Transverse colon (tissue), 4 donors: ENCODE measurements at regions of chr14 and their contacts with region 1.

Region 1: DNA sequence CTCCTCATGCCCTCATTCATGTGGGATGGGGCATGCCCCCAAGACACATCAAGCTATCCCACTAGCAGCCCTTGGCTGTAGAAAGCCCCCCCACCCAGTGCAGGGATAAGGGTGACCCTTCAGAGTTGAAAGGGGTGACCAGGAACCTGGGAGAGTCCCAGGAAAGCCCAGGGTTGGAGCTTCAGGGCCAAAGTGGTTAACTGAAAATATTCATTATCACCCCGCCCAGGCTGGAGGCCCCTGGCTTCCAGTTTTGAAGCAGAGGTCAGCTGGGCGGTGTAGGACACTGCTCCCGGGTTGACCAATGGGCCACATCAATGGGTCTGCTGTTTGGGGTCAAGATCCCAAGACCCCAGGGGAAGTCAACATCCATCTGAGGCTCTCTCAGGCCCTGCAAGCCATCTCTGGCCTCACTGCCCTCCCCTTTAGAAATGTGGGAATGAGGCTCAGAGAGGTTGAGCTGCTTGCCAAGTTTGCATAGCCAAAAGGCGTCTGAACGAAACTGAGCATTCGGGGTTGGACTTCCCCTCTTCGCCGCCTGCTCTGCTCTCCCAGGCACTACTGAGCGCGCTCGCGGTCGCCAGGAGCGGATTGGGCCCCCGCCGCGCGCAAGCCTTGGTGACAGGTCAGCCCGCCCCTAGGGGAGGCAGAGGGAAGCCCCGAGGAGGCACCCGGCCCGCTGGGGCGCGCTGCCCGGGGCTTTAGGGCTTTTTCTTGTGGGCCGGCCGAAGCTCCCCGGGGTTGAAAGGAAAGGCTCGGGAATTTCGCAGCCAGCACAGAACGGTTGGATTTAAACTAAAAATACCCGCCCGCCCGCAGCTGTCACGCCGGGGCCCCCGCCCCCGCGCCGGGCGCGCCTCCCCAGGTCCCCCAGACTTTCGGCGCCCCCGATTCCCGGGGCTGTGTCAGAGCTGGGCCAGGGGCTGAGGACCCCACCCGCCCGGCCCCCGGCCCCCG is 576 bp downstream of the SYNE3 start:
- DNase-seq: peak; percentile 85
- H3K4me3 ChIP-seq: peak overlapping the region; percentile 37 to 92 (median 67)
- H3K27ac ChIP-seq: peak overlapping the region; percentile 81 to 90 (median 86)
- H3K4me1 ChIP-seq: peaks cover 23 to 62% (median 40%) of the 10 kb centered on the region in 4 donors
- H3K27me3 ChIP-seq: no peaks in the 10 kb centered on the region
- CTCF ChIP-seq: peak; percentile 35 to 59 (median 47)
- EP300 ChIP-seq: no peak
- POLR2A ChIP-seq: no peak

Region 2: DNA sequence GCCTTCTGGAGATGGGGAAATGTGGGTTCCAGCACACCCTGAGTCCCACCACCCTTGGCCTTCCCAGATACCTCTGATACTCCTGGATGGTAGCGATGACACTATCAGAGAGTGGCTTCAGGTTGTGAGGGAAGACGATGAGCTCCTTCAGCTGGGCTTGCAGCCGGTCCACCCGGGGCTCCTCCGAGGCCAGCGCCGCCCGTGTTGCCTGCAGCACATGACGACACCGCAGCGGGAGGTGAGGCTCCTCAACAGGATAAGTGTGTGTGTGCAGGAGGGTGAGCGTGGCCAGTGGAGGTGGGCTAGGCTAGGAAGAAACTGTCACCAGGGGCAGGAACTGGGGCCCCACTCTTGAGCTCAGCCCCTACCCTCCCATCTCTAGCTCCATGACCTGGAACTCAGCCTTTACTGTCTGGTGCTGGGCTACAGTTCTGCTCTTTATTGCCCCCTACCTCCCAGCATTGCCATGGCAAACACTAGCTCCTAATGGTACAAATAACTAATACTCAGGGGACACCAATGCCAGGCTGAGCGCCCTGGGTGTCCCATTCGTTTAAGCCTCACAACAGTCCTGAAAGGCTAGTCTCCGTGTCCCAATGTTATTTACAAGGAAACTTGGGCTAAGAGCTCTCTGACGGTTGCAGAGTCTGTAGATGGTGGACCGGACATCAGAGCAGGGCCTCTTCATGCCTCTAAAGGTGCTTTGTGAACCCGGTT is 63.5 kb before region 1 on chr14:
- in situ Hi-C with region 1: loop called in 1 of 4 experiments (anchors 10 kb)
- intact Hi-C with region 1: loop called (anchors 5 kb)
- DNase-seq: no peak
- H3K4me3 ChIP-seq: no peak overlapping the region
- H3K27ac ChIP-seq: no peak overlapping the region
- H3K4me1 ChIP-seq: no peaks in the 10 kb centered on the region
- H3K27me3 ChIP-seq: no peaks in the 10 kb centered on the region
- CTCF ChIP-seq: peak in 2 of 5 experiments; percentile 12 to 17
- EP300 ChIP-seq: no peak
- POLR2A ChIP-seq: no peak

Region 3: DNA sequence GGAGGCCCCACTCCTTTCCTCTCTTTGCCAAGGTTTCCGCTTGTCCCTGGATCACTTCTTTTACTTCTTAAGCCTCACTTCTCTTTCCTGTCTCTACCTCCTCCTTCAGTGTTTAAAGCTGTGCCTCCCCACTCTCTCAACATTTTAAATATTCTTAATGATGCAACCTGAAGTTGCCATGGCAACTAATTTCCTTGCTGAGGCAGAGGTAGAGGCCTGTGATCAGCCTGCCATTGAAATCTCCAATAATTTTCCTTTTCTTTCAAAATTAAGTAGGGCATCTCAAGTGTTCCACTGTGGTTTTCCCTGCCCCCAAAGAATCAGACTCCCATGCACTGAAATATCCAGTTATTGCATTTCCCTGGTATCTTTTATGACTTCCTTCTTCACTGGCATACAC is 1172.8 kb after region 1 on chr14:
- in situ Hi-C with region 1: no loop called
- intact Hi-C with region 1: no loop called
- DNase-seq: no peak
- H3K4me3 ChIP-seq: no peak overlapping the region
- H3K27ac ChIP-seq: no peak overlapping the region
- H3K4me1 ChIP-seq: no peaks in the 10 kb centered on the region
- H3K27me3 ChIP-seq: no peaks in the 10 kb centered on the region
- CTCF ChIP-seq: no peak
- EP300 ChIP-seq: no peak
- POLR2A ChIP-seq: no peak